AG04450 (cell line): ENCODE measurements at regions of chr1 and their contacts with region 1.

Region 1: DNA sequence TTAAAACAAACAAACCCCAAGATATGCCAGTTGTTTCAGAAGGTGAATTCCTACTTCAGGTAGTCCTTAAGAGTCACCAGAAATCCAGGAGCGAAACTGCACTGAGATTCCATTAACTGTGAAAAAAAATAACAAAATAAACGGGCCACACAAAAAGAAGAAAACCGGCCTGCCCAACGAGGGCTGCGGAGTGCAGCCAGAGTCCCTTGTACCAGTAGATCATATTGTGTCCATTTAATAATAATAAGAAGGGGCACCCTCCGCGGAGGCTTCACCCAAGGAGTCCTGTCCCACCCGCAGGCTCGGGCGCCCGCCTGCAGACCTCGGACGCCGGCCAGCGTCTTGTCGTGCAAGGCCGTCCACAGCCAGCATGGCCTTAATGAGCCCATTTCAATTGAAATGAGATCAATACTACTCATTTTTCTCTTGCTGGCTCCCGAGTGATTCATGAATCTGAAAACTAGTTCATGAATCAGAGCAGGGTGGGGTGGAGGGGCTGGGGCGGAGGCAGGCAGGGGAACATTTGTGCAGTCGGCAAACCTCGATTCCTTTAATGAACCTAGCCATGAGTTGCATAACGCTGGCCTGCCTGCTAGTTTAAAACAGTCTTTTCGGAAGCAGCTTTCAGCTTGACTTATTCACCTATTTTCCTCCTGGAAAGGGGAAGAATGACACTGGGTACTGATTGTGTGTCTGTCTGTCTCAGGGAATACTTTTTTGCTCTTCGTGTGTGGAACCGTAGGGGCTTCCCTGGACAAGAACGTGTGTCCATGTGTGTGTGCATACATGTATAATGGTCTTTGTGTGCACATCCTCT is 113.1 kb upstream of the IRF2BP2 start:
- DNase-seq: peak; percentile 65
- H3K4me3 ChIP-seq: peak overlapping the region; percentile 37
- H3K27ac ChIP-seq: peak overlapping the region; percentile 100
- H3K27me3 ChIP-seq: no peaks in the 10 kb centered on the region
- CTCF ChIP-seq: no peak

Region 2: GRCh38 chr1:234355782-234356510 is 367.2 kb before region 1 on chr1:
- CTCF ChIA-PET with region 1: no interaction called
- POLR2A ChIA-PET with region 1: no interaction called
- DNase-seq: no peak
- H3K4me3 ChIP-seq: no peak overlapping the region
- H3K27ac ChIP-seq: no peak overlapping the region
- H3K27me3 ChIP-seq: no peaks in the 10 kb centered on the region
- CTCF ChIP-seq: no peak

Region 3: DNA sequence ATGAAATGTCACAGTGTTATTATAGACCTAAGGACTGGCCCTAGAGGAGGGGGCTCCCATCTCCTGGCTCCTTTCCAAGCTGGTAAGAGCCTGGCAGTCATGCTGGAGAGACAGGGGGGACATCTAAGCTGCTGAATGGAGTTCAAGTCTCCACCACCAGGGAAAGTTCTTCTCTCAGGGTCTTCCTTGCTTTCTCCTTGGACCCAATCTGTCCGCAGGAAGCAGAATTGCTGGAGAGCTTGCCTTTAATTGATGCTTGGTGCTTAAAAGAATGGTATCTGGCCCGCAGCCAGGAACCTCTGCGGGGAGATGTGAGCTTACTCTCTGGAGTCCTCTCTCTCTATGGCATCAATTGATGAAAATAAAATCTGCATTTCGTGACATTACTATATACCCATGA is 138.2 kb before region 1 on chr1:
- CTCF ChIA-PET with region 1: no interaction called
- POLR2A ChIA-PET with region 1: no interaction called
- DNase-seq: no peak
- H3K4me3 ChIP-seq: no peak overlapping the region
- H3K27ac ChIP-seq: no peak overlapping the region
- H3K27me3 ChIP-seq: no peaks in the 10 kb centered on the region
- CTCF ChIP-seq: no peak

Region 4: DNA sequence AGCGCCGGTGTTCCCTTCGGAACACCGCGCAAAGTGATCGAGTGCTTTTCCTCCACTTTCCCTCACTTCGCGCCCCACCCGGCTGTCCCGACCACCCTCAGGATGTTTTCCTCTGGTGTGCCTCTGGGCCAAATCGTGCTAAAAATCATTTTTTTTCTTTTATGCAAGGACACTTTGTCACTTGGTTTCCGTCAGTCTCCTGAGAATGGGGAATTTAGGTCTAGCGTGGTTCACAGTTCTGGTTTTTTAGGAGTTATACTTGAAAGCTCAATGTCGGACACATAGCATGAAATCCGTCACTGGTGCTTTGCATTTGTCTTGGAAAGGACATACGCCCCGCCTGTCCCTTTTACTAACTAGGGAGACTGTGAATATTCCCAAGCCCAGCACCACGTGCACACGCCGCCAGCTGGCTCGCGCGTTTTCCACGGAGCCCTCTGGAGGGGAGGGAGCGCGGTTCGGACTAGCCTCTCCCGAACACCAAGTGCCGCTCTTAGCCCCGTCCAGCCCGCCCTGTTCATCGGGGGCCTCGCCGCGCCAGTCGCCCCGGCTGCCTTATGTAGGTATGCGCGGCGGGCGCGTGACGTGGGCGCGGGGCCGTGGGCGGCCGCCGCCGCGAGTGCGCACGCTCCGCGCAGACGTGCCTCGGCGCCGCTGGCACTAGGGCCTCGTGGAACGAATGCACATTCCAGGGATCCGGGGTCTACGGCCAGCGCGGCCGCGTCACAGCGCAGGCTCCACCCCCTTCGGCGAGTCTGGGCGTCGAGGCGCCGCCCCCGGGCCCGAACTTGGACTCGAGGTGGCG is 112.6 kb before region 1 on chr1:
- CTCF ChIA-PET with region 1: interaction called, 3 read pairs
- POLR2A ChIA-PET with region 1: interaction called, 79 read pairs
- DNase-seq: peak; percentile 89
- H3K4me3 ChIP-seq: peak overlapping the region; percentile 68
- H3K27ac ChIP-seq: peak overlapping the region; percentile 96
- H3K27me3 ChIP-seq: no peaks in the 10 kb centered on the region
- CTCF ChIP-seq: peak; percentile 16; the same call in 1 of the 2 replicates

Region 5: DNA sequence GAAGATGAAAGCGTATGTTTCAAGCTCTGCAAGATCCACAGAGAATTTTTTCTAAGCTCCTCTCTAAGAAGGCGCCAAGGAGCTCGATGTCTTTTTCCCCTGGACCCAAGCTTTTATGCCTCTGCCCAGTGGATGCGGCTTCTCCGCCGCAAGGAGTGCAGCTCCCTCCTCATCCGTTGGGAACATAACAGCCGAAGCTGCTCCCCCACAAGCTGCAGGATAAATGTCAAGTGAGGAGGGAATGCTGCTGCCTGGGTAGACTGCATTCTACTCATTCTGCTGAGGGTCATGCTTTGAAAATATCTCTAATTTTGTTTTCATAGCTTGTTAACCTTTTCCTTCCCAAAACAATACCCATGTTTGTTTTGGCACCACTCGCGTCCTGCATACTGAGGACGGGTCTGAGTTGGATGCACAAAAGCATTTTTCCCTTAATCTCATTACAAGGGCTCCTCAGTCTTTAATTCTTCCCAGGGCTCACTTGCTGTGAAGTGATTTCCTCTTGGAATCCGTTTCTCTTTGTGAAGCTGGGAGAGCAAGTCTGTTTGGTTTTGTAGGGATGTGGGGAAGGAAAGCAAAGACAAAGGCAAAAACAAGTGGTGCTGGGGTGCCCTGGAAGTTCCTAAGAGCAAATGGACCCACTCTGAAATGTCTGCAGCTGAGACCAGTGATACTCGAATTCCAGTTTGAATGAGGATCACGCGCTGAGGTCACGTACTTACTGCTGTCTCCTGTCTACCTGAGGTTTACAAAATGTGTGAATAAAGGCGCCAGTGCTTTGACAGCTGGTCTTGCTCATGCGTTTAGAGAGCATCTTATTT is 20.9 kb after region 1 on chr1:
- CTCF ChIA-PET with region 1: interaction called, 3 read pairs
- POLR2A ChIA-PET with region 1: interaction called, 12 read pairs
- DNase-seq: no peak
- H3K4me3 ChIP-seq: no peak overlapping the region
- H3K27ac ChIP-seq: peak overlapping the region; percentile 11
- H3K27me3 ChIP-seq: no peaks in the 10 kb centered on the region
- CTCF ChIP-seq: peak; percentile 19; the same call in 1 of the 2 replicates

Region 6: DNA sequence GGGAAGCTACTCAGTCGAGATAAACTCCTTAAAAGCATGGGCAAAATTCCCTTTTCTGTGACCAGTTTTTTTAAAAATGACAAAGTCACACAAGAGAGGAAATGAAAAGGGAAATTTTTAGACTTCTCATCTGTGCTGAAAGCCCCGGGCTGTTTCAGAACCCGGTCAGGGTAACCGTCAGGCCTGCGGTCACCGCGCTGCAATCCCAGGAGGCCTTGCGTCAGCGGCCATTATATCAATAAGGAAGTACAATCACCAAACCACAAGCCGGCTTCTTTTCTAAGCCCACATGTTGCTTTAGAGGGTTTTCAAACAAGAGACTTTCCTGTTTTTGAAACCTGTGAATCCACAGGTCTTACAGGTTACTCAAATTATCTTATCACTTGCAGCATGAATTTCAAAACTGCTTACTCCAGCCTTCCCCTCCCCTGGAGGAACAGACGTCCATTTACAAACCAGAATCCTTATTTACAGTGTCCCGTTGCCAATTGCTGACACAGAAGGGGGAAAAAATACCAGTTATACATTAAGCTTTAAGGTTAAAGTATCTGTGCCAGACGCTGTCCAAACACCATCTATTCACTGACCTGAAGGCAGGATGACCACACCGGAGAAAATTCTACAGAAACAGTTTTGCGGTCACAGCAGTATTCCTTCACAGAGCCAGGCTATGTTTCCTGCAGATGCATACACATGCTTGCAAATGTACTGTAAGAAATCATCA is 240.2 kb after region 1 on chr1:
- CTCF ChIA-PET with region 1: no interaction called
- POLR2A ChIA-PET with region 1: interaction called, 10 read pairs
- DNase-seq: peak; percentile 86
- H3K4me3 ChIP-seq: peak overlapping the region; percentile 11; the same call in 1 of the 2 replicates
- H3K27ac ChIP-seq: peak overlapping the region; percentile 98
- H3K27me3 ChIP-seq: no peaks in the 10 kb centered on the region
- CTCF ChIP-seq: no peak

Region 7: GRCh38 chr1:234970731-234971476 is 247.8 kb after region 1 on chr1:
- CTCF ChIA-PET with region 1: interaction called, 3 read pairs
- POLR2A ChIA-PET with region 1: interaction called, 27 read pairs
- DNase-seq: peak; percentile 97
- H3K4me3 ChIP-seq: peak overlapping the region; percentile 13; the same call in 1 of the 2 replicates
- H3K27ac ChIP-seq: peak overlapping the region; percentile 100
- H3K27me3 ChIP-seq: no peaks in the 10 kb centered on the region
- CTCF ChIP-seq: no peak

Region 8: DNA sequence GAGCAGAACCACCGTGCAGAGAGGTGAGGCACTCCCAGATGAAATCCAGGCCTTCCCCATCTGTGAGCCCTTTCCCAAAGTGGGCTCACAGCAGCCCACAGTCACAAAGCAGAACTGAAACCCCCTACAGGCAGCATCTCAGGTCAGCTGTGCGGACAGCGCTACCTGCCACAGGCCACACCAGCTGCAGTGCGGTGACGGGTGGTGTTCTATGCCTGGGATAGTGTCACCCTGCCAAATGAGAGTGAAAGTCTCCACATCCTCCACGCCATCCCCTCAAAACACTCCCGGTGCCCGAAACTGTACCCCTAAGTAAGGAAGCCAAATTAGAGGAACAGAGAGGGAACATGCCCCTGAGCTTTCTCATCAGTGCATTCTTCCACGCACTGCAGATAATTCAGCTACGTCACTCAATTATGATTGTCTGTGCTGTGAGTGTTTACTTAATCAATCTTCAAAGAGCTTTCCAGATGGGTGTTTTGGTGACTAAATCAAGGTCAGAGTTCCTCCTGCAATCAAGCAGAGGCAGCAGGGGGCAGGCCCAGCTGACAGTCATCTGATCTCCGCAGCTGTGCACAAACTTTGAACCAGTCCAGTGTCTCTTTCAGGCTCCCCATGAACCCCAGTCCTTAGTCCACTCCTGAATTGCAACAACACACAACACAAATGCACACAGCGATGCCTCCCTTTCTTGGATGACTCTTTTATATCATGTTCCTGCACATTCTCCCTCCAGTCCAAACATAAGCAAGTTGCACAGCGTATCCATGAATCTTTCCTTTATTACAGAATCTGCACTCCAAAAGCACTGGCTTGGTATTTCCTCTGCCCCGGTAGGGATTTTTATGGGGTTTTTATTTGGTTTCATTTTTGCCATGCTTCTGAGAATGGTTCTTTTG is 255.5 kb after region 1 on chr1:
- CTCF ChIA-PET with region 1: no interaction called
- POLR2A ChIA-PET with region 1: interaction called, 13 read pairs
- DNase-seq: no peak
- H3K4me3 ChIP-seq: no peak overlapping the region
- H3K27ac ChIP-seq: peak overlapping the region; percentile 98
- H3K27me3 ChIP-seq: no peaks in the 10 kb centered on the region
- CTCF ChIP-seq: 0 out of 2 replicates have a peak, but pooled peaks have one; percentile 17

Region 9: GRCh38 chr1:235077571-235078479 is 354.7 kb after region 1 on chr1:
- CTCF ChIA-PET with region 1: no interaction called
- POLR2A ChIA-PET with region 1: interaction called, 13 read pairs
- DNase-seq: no peak
- H3K4me3 ChIP-seq: no peak overlapping the region
- H3K27ac ChIP-seq: peak overlapping the region; percentile 47
- H3K27me3 ChIP-seq: no peaks in the 10 kb centered on the region
- CTCF ChIP-seq: no peak